ENCODE measurements at regions of chr6 and their contacts with region 1.

Region 1: DNA sequence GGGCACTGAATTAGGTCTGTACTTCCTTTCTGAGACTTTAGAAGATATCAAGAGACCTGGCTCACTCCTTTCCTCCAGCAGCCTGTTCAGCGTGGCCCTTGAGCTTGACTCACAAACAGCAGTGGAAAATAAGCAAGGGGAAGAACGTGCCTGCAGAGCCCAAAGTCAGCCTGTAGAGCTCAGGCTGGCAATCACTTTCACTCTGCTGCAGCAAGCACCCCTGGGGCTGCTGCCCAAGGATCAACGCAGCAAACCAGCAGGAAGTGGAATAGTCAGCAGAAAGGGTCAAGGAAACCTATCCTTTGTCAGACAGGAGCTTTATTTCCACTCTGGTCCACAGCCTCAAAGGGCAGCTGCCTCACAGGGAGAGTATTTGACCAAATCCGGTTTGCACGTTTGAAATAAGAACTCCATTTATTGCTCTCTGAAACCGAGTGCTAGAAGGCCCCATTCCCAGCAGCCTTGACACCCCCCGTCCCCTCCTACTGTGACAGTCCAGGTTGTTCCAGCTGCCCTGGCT is 77.4 kb downstream of the PRDM1 start:
- DNase-seq: peak; percentile 80
- H3K4me3 Mint-ChIP-seq: peak overlapping the region; percentile 64
- H3K27ac Mint-ChIP-seq: peak overlapping the region; percentile 91
- H3K4me1 Mint-ChIP-seq: peaks cover 60% of the 10 kb centered on the region
- H3K27me3 Mint-ChIP-seq: no peaks in the 10 kb centered on the region

Region 2: DNA sequence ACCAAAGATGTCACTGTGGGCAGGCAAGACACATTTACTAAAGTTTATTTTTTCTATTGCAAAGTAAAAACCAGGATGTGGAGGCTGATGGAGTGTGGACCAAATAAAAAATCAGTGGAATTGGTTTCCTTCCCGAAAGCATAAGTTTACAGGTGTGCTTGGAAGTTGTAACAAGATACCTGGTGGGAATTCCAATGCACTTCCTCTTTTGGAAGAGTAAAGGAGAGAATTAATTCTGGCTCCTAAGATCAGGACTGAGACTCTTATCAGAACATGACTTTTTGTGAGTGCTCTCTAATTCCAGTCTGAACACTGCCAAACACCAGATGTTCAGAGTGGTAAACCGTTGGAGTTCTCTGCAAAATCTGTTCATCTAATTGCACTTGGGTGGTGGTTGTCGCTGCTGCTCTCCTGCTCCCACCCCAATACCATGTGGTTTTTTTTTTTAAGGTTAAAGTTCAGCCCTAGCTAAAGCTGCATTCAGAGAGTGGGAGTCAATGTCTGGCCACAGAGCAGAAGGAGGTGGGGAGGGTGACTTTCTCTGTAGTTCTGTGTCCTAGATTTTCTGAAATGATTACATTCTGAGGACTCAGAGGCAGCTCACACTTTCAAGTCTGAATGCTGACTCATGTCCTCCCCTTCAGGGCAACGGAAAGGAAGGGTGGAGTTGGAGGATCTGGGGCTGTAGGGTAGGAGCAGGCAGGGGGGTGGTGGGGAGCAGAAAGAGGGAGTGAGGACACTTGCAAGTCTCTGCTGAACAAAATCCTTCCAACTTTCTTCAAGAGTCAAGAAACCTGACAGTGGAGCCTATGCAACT is 353.2 kb before region 1 on chr6:
- CTCF ChIA-PET with region 1: no interaction called
- POLR2A ChIA-PET with region 1: interaction called, 3 read pairs
- intact Hi-C with region 1: loop called (anchors 1 kb)
- DNase-seq: peak; percentile 82
- H3K4me3 Mint-ChIP-seq: no peak overlapping the region
- H3K27ac Mint-ChIP-seq: peak overlapping the region; percentile 53
- H3K4me1 Mint-ChIP-seq: peaks cover 42% of the 10 kb centered on the region
- H3K27me3 Mint-ChIP-seq: peaks cover 10% of the 10 kb centered on the region

Region 3: DNA sequence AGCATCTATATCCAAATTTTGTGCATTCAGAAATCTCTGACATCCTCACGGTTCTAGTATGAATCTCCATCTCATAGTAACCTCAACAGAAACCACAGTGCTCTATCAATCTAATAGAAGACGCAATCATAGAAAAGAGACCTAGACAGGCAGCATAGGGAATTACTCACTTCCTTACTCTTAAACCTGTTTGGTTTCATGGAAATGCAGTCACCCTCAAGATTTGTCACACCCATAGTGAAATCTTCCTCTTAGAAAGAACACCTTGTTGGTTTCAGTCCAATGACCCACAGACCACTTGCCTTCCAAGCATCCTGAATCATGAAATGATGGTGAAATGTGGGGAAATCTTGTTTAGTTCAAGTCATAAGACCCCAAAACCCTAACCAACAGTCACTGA is 243.4 kb before region 1 on chr6:
- CTCF ChIA-PET with region 1: no interaction called
- POLR2A ChIA-PET with region 1: no interaction called
- intact Hi-C with region 1: loop called (anchors 1 kb)
- DNase-seq: peak; percentile 50
- H3K4me3 Mint-ChIP-seq: no peak overlapping the region
- H3K27ac Mint-ChIP-seq: peak overlapping the region; percentile 74
- H3K4me1 Mint-ChIP-seq: peaks cover 13% of the 10 kb centered on the region
- H3K27me3 Mint-ChIP-seq: peaks cover 7% of the 10 kb centered on the region

Region 4: DNA sequence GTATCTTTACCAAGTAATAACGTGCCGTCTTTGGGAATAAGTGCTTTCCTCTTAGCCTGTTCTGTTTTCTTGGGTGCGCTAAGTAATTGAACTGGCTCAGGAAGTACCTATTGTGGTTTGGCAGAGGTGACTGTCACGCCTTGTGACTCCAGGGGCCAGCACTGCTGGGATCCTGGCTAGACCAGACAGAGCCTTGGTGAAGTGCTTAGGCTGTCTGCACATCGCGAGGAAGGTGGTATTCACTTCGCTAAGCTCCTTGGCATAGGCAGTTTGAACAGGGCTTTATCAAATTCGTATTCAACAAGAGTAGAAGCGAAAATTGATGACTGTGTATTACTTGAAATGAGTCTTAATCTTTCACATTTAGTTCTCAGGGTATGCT is 59.8 kb before region 1 on chr6:
- CTCF ChIA-PET with region 1: interaction called, 9 read pairs
- POLR2A ChIA-PET with region 1: interaction called, 23 read pairs
- intact Hi-C with region 1: loop called (anchors 1 kb)
- DNase-seq: peak; percentile 71
- H3K4me3 Mint-ChIP-seq: peak overlapping the region; percentile 91
- H3K27ac Mint-ChIP-seq: peak overlapping the region; percentile 96
- H3K4me1 Mint-ChIP-seq: peaks cover 79% of the 10 kb centered on the region
- H3K27me3 Mint-ChIP-seq: no peaks in the 10 kb centered on the region

Region 5: DNA sequence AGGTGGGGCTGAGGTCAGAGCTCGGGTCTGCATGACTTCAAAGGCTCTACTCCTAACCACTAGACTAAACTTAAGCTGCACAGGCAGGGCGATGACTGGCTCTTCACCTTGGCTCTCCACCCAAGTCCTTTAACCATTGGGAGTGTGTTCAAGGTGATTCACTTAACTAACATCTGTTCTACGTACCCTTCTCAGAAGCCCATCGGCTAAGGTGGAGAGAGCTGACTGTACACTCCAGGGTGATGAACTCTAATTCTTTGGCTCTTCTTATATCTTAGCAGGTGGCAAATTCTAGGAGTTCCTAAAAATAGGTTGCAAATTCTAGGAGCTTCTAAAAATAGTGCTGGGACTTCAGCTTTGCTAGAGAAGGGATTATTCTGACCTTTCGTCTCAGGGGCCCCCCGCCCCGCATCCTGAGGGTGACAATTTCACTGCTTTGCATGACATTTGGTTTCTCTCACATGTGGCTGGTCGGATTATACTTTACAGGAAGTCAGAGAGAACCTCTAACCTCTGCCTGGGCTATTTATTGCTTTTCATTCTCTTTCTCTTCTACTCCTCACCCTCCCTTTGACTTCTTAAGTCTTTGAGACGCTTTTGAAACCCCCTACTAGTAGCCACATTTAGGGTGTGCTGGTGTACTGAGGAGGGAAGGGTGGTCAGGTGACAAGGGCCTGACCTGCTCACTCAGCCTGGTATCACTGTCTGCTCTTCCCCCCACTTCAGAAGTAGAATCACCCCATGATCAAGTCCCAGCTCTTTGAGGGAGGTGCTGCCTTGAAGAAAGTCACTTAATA is 21.9 kb before region 1 on chr6:
- CTCF ChIA-PET with region 1: interaction called, 10 read pairs
- POLR2A ChIA-PET with region 1: interaction called, 19 read pairs
- intact Hi-C with region 1: loop called (anchors 1 kb)
- DNase-seq: peak; percentile 80
- H3K4me3 Mint-ChIP-seq: peak overlapping the region; percentile 10
- H3K27ac Mint-ChIP-seq: peak overlapping the region; percentile 83
- H3K4me1 Mint-ChIP-seq: peaks cover 49% of the 10 kb centered on the region
- H3K27me3 Mint-ChIP-seq: no peaks in the 10 kb centered on the region

Region 6: GRCh38 chr6:106181664-106182418 is 18.3 kb after region 1 on chr6:
- CTCF ChIA-PET with region 1: interaction called, 15 read pairs
- POLR2A ChIA-PET with region 1: interaction called, 72 read pairs
- intact Hi-C with region 1: loop called (anchors 1 kb)
- DNase-seq: no peak
- H3K4me3 Mint-ChIP-seq: no peak overlapping the region
- H3K27ac Mint-ChIP-seq: peak overlapping the region; percentile 46
- H3K4me1 Mint-ChIP-seq: peaks cover 60% of the 10 kb centered on the region
- H3K27me3 Mint-ChIP-seq: no peaks in the 10 kb centered on the region

Region 7: GRCh38 chr6:106519460-106520394 is 356.2 kb after region 1 on chr6:
- CTCF ChIA-PET with region 1: no interaction called
- POLR2A ChIA-PET with region 1: no interaction called
- intact Hi-C with region 1: loop called (anchors 5 kb)
- DNase-seq: peak; percentile 92
- H3K4me3 Mint-ChIP-seq: peak overlapping the region; percentile 76
- H3K27ac Mint-ChIP-seq: peak overlapping the region; percentile 99
- H3K4me1 Mint-ChIP-seq: peaks cover 67% of the 10 kb centered on the region
- H3K27me3 Mint-ChIP-seq: no peaks in the 10 kb centered on the region

Measured in activated CD4-positive, alpha-beta memory T cell treated with anti-CD3 and anti-CD28 coated beads for 36 hours (primary cell).